Common myeloid progenitor, CD34-positive (primary cell): ENCODE measurements at regions of chr19 and their contacts with region 1.

Region 1: DNA sequence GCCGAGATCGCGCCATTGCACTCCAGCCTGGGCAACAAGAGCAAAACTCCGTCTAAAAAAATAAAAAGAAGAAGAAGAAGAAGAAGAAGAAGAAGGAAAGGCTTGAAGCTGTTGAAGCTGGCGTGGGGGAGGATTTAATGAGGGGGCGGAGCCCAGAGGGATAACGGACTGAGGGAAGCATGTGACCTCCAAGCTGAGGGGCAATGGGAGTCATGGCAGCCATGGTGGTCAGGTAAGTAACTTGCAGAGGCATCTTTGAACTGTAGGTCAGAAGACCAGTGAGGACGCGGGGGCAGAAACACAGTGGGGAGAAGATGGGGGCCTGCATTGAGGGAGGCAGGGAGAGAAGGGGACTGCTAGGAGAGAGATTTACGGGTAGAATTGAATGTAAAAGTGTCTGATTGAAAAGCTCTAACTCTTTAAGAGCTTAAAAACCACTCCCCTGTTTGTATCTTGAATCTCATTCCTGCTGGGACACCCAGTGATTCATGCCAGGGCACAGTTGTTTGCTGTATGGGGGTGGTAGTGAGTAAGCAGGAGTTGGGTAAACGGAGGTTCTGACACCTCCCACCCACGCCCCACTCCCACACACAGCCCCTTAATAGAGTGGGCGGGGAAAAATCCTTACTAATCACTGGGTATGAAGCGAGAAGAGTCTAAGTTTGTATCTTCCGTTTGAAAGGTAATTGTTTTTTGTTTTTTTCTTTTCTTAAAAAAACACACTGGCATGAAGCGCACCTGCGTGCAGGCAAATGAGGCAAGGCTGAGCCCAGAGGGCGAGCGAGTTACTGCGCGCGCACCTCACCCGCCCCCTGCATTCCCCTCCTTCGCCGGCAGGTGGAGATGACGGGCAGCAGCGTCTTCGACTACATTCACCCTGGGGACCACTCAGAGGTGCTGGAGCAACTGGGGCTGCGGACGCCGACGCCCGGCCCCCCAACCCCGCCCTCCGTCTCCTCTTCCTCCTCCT is 13.0 kb downstream of the TMEM160 start:
- DNase-seq: peak; percentile 83 to 88 (median 87)
- H3K4me3 ChIP-seq: peak overlapping the region; percentile 9 to 75 (median 65)
- H3K27ac ChIP-seq: peak overlapping the region in 1 of 2 experiments; percentile 38
- H3K4me1 ChIP-seq: peaks cover 2 to 19% (median 15%) of the 10 kb centered on the region in 4 experiments
- H3K27me3 ChIP-seq: peaks cover 0 to 11% (median 2%) of the 10 kb centered on the region in 5 experiments

Region 2: GRCh38 chr19:47013041-47013517 is 22.3 kb before region 1 on chr19:
- CTCF ChIA-PET with region 1: interaction called, 20 read pairs
- POLR2A ChIA-PET with region 1: interaction called, 3 read pairs
- DNase-seq: peak in 2 of 3 donors; percentile 33 to 36
- H3K4me3 ChIP-seq: no peak overlapping the region
- H3K27ac ChIP-seq: no peak overlapping the region
- H3K4me1 ChIP-seq: peaks cover 0 to 3% (median 0%) of the 10 kb centered on the region in 4 experiments
- H3K27me3 ChIP-seq: peaks cover 0 to 13% (median 6%) of the 10 kb centered on the region in 5 experiments

Region 3: DNA sequence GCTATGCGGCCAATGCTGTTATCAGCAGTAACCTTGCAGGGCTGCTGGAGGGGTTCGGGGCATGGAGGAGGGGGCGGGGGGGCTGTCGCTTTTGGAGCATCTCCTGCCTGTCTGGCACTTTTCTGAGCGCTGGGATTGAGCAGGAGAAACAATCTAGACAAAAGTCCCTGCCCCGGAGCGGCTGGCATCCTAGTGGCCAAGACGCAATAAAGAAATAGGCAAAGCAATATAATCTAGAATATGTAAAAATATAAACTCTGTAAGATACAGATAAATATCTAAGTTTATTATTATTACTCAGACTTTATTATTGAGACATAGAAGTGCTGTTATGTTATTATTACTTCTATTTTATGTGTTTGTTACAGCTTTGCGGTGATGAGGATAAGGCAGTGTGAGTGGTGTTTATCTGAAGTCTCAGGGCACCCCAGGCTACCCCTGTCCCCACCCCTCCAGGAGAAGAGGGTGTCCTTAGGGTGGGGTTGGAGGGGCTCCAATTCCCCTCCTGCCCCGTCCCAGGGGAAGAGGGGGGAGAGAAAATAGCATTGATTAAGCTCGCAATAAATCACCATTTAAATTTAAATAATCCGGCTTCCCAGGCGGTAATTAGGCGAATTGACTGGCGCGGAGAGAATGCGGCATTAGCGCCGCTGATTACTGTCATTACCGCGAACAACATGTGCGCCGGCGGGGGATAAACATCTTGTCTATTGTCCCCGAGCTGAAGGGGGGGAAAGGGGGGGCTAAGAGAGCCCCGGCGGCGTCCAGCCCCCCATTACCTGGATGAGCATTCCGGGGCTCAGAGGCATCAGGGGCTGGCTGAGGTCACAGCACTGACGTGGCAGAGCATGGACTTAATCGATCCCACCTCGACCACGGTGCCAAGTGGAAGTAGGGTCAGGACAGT is 12.6 kb before region 1 on chr19:
- CTCF ChIA-PET with region 1: interaction called, 10 read pairs
- POLR2A ChIA-PET with region 1: interaction called, 4 read pairs
- DNase-seq: peak in 1 of 3 donors; percentile 32
- H3K4me3 ChIP-seq: no peak overlapping the region
- H3K27ac ChIP-seq: no peak overlapping the region
- H3K4me1 ChIP-seq: peaks cover 0 to 22% (median 17%) of the 10 kb centered on the region in 4 experiments
- H3K27me3 ChIP-seq: peaks cover 6 to 95% (median 39%) of the 10 kb centered on the region in 5 experiments